ENCODE measurements at regions of chr2 and their contacts with region 1.

Region 1: DNA sequence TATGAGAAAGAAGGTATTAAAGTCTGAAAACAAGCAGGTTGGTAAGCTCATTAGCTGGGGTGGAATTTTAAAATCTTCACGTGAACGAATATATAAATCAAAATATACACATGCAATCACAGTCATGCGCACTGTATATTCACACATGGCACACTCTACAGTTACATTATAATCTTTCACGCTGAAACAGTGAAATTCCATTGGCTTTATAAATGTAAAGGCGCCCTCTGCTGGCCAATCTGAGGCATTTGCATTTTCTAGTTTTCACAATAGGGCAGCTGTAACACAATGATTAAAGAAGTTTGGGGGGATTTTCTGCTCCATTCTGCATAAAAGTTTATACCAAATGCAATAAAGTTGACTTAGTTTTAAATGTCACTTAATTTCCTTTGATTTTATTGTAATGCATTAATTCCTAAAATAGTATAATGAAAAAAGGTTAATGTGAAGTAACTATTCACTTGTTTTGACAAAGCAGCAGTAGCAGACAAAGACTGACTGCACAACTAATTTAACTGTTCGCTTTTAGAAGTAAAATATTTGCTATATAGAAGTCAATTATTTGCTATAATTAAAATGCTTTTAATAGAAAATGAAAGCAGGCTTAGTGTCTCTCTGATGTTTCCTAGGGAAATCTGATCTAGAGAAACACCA is 17.2 kb downstream of the IFIH1 start:
- DNase-seq: no peak
- ATAC-seq: peak; percentile 57
- H3K4me3 Mint-ChIP-seq: no peak overlapping the region
- H3K27ac Mint-ChIP-seq: no peak overlapping the region
- H3K4me1 Mint-ChIP-seq: no peaks in the 10 kb centered on the region
- H3K27me3 Mint-ChIP-seq: no peaks in the 10 kb centered on the region
- CTCF ChIP-seq: no peak

Region 2: DNA sequence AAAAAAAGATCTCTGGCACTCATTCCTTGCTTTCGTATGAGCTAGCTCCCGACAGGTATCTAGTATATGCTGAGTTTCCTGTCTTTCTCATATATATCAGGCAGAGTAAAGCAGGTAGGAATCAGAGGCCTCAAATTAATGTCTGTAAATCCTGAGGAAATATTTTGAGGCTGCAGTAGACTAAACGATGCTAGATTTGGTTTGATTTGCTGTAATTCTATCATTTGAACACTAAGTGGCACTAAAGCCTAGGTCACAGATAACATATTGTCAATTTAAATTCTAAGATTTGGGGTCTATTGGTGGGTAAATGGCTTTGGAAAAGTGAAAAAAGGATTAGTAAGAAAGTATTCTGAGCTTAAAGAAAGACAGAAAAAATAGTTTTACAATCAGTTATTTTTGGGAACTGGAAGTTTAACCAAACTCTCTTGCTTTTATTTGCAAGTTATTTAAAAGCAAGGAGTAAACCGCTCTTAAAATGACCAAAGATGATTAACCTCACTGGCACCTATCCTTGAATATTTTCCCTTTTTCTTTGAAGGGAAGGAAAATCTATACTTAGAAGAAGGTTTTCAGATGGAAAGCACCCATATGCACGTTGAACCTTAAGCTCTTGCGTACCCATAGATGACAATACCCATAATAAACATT is 714.6 kb before region 1 on chr2:
- CTCF ChIA-PET with region 1: interaction called, 4 read pairs
- POLR2A ChIA-PET with region 1: no interaction called
- intact Hi-C with region 1: loop called (anchors 2 kb)
- DNase-seq: no peak
- ATAC-seq: no peak
- H3K4me3 Mint-ChIP-seq: no peak overlapping the region
- H3K27ac Mint-ChIP-seq: no peak overlapping the region
- H3K4me1 Mint-ChIP-seq: no peaks in the 10 kb centered on the region
- H3K27me3 Mint-ChIP-seq: no peaks in the 10 kb centered on the region
- CTCF ChIP-seq: no peak

Region 3: DNA sequence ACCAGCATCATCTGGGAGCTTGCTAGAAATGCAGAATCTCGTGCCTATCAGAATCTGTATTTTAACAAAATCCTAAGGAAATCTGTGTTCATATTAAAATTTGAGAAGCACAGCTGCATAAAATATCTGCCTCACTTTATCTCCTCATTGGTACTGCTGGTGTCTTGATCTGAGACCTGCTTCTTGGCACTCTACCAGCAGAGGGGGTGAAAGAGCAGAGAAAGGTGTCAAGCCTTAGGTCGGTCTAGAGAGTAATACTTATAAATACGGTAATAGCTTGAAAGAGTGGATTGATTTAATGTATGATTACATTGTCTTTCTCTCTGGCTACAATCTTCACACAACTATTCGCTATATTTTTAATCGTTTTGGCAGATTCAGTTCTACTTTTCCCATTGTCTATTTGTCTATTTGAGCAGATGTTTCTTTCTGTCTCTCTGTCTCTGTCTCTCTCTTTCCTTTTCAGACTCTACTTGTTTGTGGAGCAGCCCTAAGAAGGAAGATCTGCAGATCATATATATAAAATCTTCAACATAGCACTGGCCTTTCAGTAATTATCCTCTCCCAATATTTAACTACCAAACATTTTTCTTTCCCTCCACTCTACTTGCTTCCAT is 147.6 kb before region 1 on chr2:
- CTCF ChIA-PET with region 1: interaction called, 8 read pairs
- POLR2A ChIA-PET with region 1: no interaction called
- intact Hi-C with region 1: loop called (anchors 1 kb)
- DNase-seq: no peak
- ATAC-seq: peak; percentile 82
- H3K4me3 Mint-ChIP-seq: no peak overlapping the region
- H3K27ac Mint-ChIP-seq: no peak overlapping the region
- H3K4me1 Mint-ChIP-seq: peaks cover 3% of the 10 kb centered on the region
- H3K27me3 Mint-ChIP-seq: peaks cover 8% of the 10 kb centered on the region
- CTCF ChIP-seq: peak; percentile 86

Region 4: GRCh38 chr2:162221064-162221463 is 80.2 kb before region 1 on chr2:
- CTCF ChIA-PET with region 1: interaction called, 53 read pairs
- POLR2A ChIA-PET with region 1: no interaction called
- intact Hi-C with region 1: loop called (anchors 1 kb)
- DNase-seq: peak; percentile 35
- ATAC-seq: peak; percentile 64
- H3K4me3 Mint-ChIP-seq: no peak overlapping the region
- H3K27ac Mint-ChIP-seq: no peak overlapping the region
- H3K4me1 Mint-ChIP-seq: no peaks in the 10 kb centered on the region
- H3K27me3 Mint-ChIP-seq: peaks cover 15% of the 10 kb centered on the region
- CTCF ChIP-seq: peak; percentile 40

Region 5: GRCh38 chr2:162282765-162283425 is 18.4 kb before region 1 on chr2:
- CTCF ChIA-PET with region 1: interaction called, 26 read pairs
- POLR2A ChIA-PET with region 1: no interaction called
- intact Hi-C with region 1: loop called (anchors 2 kb)
- DNase-seq: no peak
- ATAC-seq: no peak
- H3K4me3 Mint-ChIP-seq: no peak overlapping the region
- H3K27ac Mint-ChIP-seq: no peak overlapping the region
- H3K4me1 Mint-ChIP-seq: no peaks in the 10 kb centered on the region
- H3K27me3 Mint-ChIP-seq: no peaks in the 10 kb centered on the region
- CTCF ChIP-seq: no peak

Region 6: GRCh38 chr2:162318328-162319180 is 17.3 kb after region 1 on chr2 and contains the start of gene IFIH1:
- CTCF ChIA-PET with region 1: interaction called, 20 read pairs
- POLR2A ChIA-PET with region 1: interaction called, 16 read pairs
- intact Hi-C with region 1: loop called (anchors 1 kb)
- DNase-seq: peak; percentile 72
- ATAC-seq: peak; percentile 93
- H3K4me3 Mint-ChIP-seq: peak within 1 kb of the TSS; percentile 94
- H3K27ac Mint-ChIP-seq: peak within 1 kb of the TSS; percentile 99
- H3K4me1 Mint-ChIP-seq: peaks cover 68% of the 10 kb centered on the region
- H3K27me3 Mint-ChIP-seq: no peaks in the 10 kb centered on the region
- CTCF ChIP-seq: no peak
- total RNA-seq, gene IFIH1: 61.8 and 63.0 TPM in 2 replicates

Region 7: GRCh38 chr2:162333968-162334367 is 32.7 kb after region 1 on chr2:
- CTCF ChIA-PET with region 1: interaction called, 73 read pairs
- POLR2A ChIA-PET with region 1: no interaction called
- intact Hi-C with region 1: loop called (anchors 1 kb)
- DNase-seq: no peak
- ATAC-seq: peak; percentile 56
- H3K4me3 Mint-ChIP-seq: no peak overlapping the region
- H3K27ac Mint-ChIP-seq: no peak overlapping the region
- H3K4me1 Mint-ChIP-seq: no peaks in the 10 kb centered on the region
- H3K27me3 Mint-ChIP-seq: no peaks in the 10 kb centered on the region
- CTCF ChIP-seq: no peak

Measured in activated B cell treated with CpG ODN at 0.5 μM for 24 hours (primary cell).